CD8-positive, alpha-beta T cell (primary cell): ENCODE measurements at regions of chr1 and their contacts with region 1.

Region 1: DNA sequence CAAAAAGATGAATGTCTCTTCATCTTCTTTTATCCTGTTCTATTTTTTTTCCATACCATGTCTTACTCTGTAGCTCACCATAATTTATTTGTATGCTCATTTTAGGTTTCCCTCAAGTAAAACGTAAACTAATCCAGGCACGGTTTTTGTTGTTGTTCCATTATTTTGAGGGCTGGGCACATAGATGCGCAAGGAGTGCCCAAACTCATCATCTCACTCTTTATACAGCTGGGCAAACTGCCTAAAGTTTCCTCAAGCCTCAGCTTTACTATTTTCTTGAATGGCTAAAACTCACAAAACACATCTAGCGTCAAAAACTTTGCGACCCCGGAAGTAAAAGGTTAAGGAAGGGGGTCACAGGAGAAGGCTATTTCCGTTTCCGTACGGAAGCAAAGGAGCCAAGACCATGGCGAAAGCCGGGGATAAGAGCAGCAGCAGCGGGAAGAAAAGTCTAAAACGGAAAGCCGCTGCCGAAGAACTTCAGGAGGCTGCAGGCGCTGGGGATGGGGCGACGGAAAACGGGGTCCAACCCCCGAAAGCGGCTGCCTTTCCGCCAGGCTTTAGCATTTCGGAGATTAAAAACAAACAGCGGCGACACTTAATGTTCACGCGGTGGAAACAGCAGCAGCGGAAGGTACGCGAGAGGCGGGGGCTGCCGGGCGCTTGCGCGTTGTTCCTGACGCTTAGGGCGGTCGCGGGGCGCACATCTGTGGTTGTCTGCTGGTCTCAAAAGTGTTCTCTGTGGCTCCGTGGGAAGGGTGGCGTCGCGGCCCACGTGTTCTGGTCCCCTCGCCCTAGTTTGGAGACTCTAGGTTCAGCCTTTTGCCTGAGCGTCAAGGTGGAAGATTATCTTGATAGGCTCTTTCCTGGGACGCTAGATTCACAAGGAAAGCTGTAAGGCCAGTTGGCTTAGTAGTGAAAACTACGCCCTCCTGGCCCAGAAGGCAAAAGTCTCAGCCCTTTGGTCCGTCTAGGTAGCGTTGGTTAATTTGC is at the start of gene RPF1:
- DNase-seq: peak; percentile 55 to 90 (median 82)
- ATAC-seq: peak; percentile 96
- H3K4me3 ChIP-seq: peak within 1 kb of the TSS; percentile 81 to 83
- H3K4me3 Mint-ChIP-seq: peak within 1 kb of the TSS; percentile 99
- H3K27ac ChIP-seq: peak within 1 kb of the TSS; percentile 88
- H3K27ac Mint-ChIP-seq: peak within 1 kb of the TSS; percentile 99
- H3K4me1 ChIP-seq: peaks cover 31% of the 10 kb centered on the region
- H3K4me1 Mint-ChIP-seq: peaks cover 42% of the 10 kb centered on the region
- H3K27me3 ChIP-seq: peaks cover 0 to 10% of the 10 kb centered on the region in 2 experiments
- H3K27me3 Mint-ChIP-seq: peaks cover 26% of the 10 kb centered on the region
- CTCF ChIP-seq: no peak
- total RNA-seq, gene RPF1: 84.2 to 85.3 TPM

Region 2: GRCh38 chr1:83827741-83828522 is 651.2 kb before region 1 on chr1:
- CTCF ChIA-PET with region 1: no interaction called
- POLR2A ChIA-PET with region 1: no interaction called
- intact Hi-C with region 1: no loop called
- DNase-seq: no peak
- ATAC-seq: no peak
- H3K4me3 ChIP-seq: no peak overlapping the region
- H3K4me3 Mint-ChIP-seq: no peak overlapping the region
- H3K27ac ChIP-seq: no peak overlapping the region
- H3K27ac Mint-ChIP-seq: no peak overlapping the region
- H3K4me1 ChIP-seq: no peaks in the 10 kb centered on the region
- H3K4me1 Mint-ChIP-seq: no peaks in the 10 kb centered on the region
- H3K27me3 ChIP-seq: no peaks in the 10 kb centered on the region
- H3K27me3 Mint-ChIP-seq: no peaks in the 10 kb centered on the region
- CTCF ChIP-seq: no peak

Region 3: DNA sequence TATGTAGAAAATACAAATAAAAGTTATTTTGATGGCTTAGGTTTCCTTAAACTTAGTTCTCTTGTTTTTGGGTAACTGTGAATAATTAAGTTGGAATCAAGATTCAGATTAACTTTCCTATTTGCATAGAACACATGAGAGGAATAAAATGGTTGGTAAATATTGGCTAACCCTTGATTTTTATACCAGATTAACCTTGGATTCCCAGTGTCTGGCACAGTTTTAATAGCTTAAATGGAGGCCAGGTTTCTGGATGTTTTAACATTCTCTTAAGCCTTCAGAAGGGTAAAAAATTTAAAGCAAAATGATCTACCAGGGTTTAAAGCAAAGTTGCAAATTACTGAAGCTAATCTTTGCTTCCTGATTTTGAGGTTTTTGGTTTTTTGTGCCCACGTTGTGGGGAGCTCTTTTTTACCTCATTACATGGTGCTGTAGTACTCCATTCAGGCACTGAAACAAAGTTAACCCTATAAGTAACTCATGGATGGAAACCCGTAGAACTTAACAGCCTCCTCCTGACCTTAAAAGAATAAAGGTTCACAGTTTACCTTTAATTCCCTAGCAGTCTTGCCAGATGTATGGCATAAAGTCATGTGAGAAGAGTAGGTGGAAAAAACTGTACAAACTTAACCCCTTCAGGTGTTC is 18.6 kb after region 1 on chr1:
- CTCF ChIA-PET with region 1: no interaction called
- POLR2A ChIA-PET with region 1: no interaction called
- intact Hi-C with region 1: loop called in 1 of 2 experiments (anchors 1 kb)
- DNase-seq: peak in 1 of 9 experiments; percentile 30
- ATAC-seq: peak; percentile 71
- H3K4me3 ChIP-seq: no peak overlapping the region
- H3K4me3 Mint-ChIP-seq: no peak overlapping the region
- H3K27ac ChIP-seq: no peak overlapping the region
- H3K27ac Mint-ChIP-seq: peak overlapping the region; percentile 49
- H3K4me1 ChIP-seq: peaks cover 24% of the 10 kb centered on the region
- H3K4me1 Mint-ChIP-seq: peaks cover 41% of the 10 kb centered on the region
- H3K27me3 ChIP-seq: no peaks in the 10 kb centered on the region
- H3K27me3 Mint-ChIP-seq: no peaks in the 10 kb centered on the region
- CTCF ChIP-seq: no peak

Region 4: GRCh38 chr1:84573967-84574842 is 95.0 kb after region 1 on chr1 and contains the start of gene CTBS:
- CTCF ChIA-PET with region 1: no interaction called
- POLR2A ChIA-PET with region 1: interaction called, 28 read pairs
- intact Hi-C with region 1: loop called (anchors 1 to 2 kb)
- DNase-seq: peak; percentile 67 to 93 (median 85)
- ATAC-seq: peak; percentile 91
- H3K4me3 ChIP-seq: peak within 1 kb of the TSS; percentile 81 to 92
- H3K4me3 Mint-ChIP-seq: peak within 1 kb of the TSS; percentile 96
- H3K27ac ChIP-seq: peak within 1 kb of the TSS; percentile 94 to 96
- H3K27ac Mint-ChIP-seq: peak within 1 kb of the TSS; percentile 99
- H3K4me1 ChIP-seq: peaks cover 20% of the 10 kb centered on the region
- H3K4me1 Mint-ChIP-seq: peaks cover 42% of the 10 kb centered on the region
- H3K27me3 ChIP-seq: no peaks in the 10 kb centered on the region
- H3K27me3 Mint-ChIP-seq: no peaks in the 10 kb centered on the region
- CTCF ChIP-seq: no peak
- total RNA-seq, gene CTBS: 17.3 to 19.7 TPM

Region 5: DNA sequence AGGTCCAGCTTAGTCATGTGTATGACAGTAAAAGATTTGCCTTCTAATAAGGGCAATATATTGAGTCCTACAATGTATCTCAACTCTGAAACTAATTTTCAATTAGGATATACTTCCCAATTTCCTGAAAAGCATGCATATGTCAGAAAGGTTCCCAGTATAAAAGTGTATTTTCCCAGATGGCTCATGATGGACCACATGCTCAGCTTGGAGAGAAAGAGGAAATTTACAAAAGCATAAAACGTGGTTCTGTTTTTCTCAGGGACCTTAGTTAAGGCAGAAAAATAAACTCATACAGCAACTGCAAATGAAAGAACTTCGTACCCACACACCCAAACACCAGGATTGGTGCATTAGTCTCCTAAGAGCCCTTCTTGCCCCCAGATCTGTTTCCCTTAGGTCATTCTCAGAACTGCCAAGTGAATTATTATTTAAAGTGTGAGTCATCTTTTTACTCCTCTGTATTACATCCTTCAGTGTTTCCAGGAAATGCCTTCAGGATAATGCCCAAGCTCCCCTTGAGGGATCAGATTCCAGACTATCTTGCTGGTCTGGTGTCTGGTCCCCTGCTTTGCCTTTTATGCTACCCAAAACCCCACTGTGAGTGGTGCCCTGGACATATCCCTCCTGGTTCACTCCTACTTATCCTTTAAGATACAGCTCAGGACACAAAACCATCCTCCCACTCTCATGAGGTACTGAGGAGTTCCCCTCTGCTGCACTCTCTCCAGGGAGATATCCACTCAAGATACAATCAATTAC is 153.7 kb after region 1 on chr1:
- CTCF ChIA-PET with region 1: no interaction called
- POLR2A ChIA-PET with region 1: no interaction called
- intact Hi-C with region 1: no loop called
- DNase-seq: no peak
- ATAC-seq: no peak
- H3K4me3 ChIP-seq: no peak overlapping the region
- H3K4me3 Mint-ChIP-seq: no peak overlapping the region
- H3K27ac ChIP-seq: no peak overlapping the region
- H3K27ac Mint-ChIP-seq: no peak overlapping the region
- H3K4me1 ChIP-seq: no peaks in the 10 kb centered on the region
- H3K4me1 Mint-ChIP-seq: no peaks in the 10 kb centered on the region
- H3K27me3 ChIP-seq: no peaks in the 10 kb centered on the region
- H3K27me3 Mint-ChIP-seq: peaks cover 5% of the 10 kb centered on the region
- CTCF ChIP-seq: no peak